Spleen (tissue), 13 donors: ENCODE measurements at regions of chr5 and their contacts with region 1.

Region 1: DNA sequence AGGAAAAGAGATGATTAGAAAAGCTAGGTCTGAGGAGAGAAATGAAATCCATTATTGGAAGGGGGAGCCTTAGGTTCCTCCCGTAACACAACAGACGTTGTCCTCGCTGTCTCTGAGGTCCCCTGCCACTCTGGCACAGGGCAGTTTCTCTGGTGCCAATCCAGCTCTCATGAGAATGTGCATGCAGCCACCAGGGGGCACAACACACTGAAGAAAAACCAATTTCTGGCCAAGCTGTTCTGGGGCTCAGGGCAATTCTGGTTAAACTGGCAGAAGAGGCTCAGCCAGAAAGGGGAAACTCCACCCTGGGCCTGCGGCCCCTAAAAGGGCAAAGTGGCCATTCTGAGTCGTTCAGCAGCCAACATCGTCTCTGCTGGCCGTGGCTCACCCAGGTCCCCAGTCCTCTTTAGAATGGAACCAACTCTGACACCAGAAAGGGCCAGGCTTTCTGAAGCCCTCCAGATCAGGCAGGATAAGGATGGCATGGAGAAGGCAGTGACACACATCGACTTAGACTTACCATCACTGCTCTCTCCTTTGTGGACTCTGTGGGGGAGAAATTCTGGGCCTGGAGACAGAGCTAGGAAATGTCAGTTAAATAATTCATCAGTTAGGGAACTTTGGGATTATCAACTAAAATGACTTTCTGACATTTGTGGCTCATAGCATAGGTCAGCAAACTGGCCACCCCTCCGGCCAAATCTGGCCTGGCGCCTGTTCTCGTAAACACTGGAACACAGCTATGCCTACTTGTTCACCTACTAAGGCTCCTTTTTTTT is 58.5 kb upstream of the GOLPH3 start:
- DNase-seq: peak; percentile 89
- H3K4me3 ChIP-seq: no peak overlapping the region
- H3K27ac ChIP-seq: peak overlapping the region in 4 of 8 donors; percentile 22 to 55 (median 37)
- H3K4me1 ChIP-seq: peaks cover 0 to 50% (median 34%) of the 10 kb centered on the region in 6 donors
- H3K27me3 ChIP-seq: no peaks in the 10 kb centered on the region
- CTCF ChIP-seq: peak; percentile 74 to 92 (median 86)
- POLR2A ChIP-seq: no peak

Region 2: GRCh38 chr5:31944684-31945445 is 287.8 kb before region 1 on chr5:
- intact Hi-C with region 1: no loop called
- DNase-seq: no peak
- H3K4me3 ChIP-seq: no peak overlapping the region
- H3K27ac ChIP-seq: no peak overlapping the region
- H3K4me1 ChIP-seq: no peaks in the 10 kb centered on the region
- H3K27me3 ChIP-seq: no peaks in the 10 kb centered on the region
- CTCF ChIP-seq: no peak
- POLR2A ChIP-seq: no peak

Region 3: DNA sequence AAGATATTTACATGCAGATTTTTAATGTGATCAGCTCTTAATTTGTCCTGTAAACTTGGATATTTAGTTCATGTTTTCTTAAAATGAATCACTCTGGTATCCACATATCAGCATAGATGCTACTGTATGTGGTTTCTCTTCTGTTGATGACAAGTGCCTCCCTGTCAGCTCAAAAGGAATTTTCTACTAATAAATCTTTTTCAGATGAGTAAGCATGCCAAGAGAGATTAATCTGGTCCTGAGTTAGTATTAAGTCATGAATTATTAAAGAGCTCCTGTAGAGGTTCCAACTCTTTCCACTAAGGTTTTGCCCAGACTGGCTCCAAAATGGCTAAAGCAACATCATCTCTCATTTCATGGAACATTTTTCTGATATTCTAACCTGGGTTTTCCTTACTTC is 187.7 kb before region 1 on chr5:
- intact Hi-C with region 1: no loop called
- DNase-seq: no peak
- H3K4me3 ChIP-seq: no peak overlapping the region
- H3K27ac ChIP-seq: no peak overlapping the region
- H3K4me1 ChIP-seq: no peaks in the 10 kb centered on the region
- H3K27me3 ChIP-seq: no peaks in the 10 kb centered on the region
- CTCF ChIP-seq: no peak
- POLR2A ChIP-seq: no peak

Region 4: DNA sequence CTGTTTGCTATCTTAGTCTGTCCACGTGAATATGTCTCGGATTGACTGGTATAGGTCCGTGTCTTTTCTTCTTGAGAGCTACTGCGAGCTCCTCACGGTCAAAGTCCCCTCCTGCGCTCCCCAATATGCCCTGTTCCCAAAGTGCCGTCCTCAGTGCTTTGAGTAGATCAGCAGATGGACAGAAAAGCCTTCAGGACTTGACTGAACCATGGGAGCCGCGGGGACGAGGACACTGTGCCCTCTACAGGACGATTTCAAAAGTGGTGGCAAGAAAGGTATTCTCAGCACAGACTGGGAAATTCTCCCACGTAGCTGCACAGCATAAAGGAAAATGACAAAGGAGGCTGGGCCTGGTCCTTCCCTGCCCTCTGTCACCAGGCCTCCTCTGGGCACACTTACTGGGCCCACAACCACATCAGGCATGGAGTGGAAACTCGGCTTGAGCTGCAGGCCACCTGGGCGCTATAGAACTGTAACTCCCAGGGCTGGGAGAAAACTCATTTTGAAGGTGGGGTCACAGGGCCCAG is 96.7 kb after region 1 on chr5:
- intact Hi-C with region 1: loop called (anchors 2 kb)
- DNase-seq: peak; percentile 80
- H3K4me3 ChIP-seq: no peak overlapping the region
- H3K27ac ChIP-seq: no peak overlapping the region
- H3K4me1 ChIP-seq: peaks cover 0 to 12% (median 0%) of the 10 kb centered on the region in 6 donors
- H3K27me3 ChIP-seq: no peaks in the 10 kb centered on the region
- CTCF ChIP-seq: peak; percentile 36 to 73 (median 61)
- POLR2A ChIP-seq: no peak

Region 5: DNA sequence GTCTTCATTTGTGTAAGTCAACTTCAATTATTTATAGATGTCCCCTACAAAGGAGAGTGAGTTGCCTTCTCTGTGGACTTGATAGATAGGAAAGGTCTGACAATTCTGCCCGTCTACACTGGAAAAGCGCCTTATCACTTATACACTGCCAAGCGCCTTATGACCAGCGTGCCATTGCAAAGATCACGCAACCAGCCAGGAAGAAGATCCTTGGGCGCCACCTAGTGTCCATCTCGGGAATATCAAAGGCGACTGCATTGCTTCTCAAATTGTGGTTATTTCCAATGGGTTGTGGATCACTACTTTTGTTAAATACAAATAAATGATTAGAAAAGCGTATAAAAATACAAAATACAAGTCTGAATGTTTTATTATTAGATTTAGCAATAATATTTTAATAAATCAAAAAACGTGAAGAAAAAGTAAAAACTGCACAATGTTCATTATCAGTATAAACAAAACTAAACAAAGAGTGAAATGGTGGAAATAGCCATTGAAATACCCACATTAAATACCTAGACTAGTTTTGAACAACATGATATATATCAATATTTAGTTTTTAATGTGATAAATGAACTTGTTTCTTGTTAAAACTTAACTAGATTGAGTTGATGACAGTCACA is 380.5 kb after region 1 on chr5:
- intact Hi-C with region 1: loop called (anchors 5 kb)
- DNase-seq: peak; percentile 90
- H3K4me3 ChIP-seq: no peak overlapping the region
- H3K27ac ChIP-seq: no peak overlapping the region
- H3K4me1 ChIP-seq: peaks cover 0 to 9% (median 2%) of the 10 kb centered on the region in 6 donors
- H3K27me3 ChIP-seq: no peaks in the 10 kb centered on the region
- CTCF ChIP-seq: peak; percentile 79 to 93 (median 88)
- POLR2A ChIP-seq: no peak